ENCODE measurements at regions of chr5 and their contacts with region 1.

Region 1: GRCh38 chr5:85813146-85813545 is 804.6 kb upstream of the COX7C start:
- DNase-seq: no peak
- ATAC-seq: no peak
- H3K4me3 ChIP-seq: no peak overlapping the region
- H3K27ac ChIP-seq: no peak overlapping the region
- H3K4me1 ChIP-seq: no peaks in the 10 kb centered on the region
- H3K27me3 ChIP-seq: no peaks in the 10 kb centered on the region
- CTCF ChIP-seq: no peak

Region 2: GRCh38 chr5:85838781-85839180 is 25.6 kb after region 1 on chr5:
- CTCF ChIA-PET with region 1: no interaction called
- POLR2A ChIA-PET with region 1: interaction called, 12 read pairs
- in situ Hi-C with region 1: no loop called
- intact Hi-C with region 1: no loop called
- DNase-seq: no peak
- ATAC-seq: no peak
- H3K4me3 ChIP-seq: no peak overlapping the region
- H3K27ac ChIP-seq: no peak overlapping the region
- H3K4me1 ChIP-seq: no peaks in the 10 kb centered on the region
- H3K27me3 ChIP-seq: no peaks in the 10 kb centered on the region
- CTCF ChIP-seq: no peak

Measured in Panc1 (cell line).